HAP-1 (cell line): ENCODE measurements at regions of chr9 and their contacts with region 1.

Region 1: GRCh38 chr9:20356403-20357035 is 265.8 kb downstream of the MLLT3 start:
- DNase-seq: peak; percentile 78 to 82
- H3K4me3 ChIP-seq: no peak overlapping the region
- H3K4me1 ChIP-seq: peaks cover 6% of the 10 kb centered on the region
- H3K27me3 ChIP-seq: no peaks in the 10 kb centered on the region

Region 2: DNA sequence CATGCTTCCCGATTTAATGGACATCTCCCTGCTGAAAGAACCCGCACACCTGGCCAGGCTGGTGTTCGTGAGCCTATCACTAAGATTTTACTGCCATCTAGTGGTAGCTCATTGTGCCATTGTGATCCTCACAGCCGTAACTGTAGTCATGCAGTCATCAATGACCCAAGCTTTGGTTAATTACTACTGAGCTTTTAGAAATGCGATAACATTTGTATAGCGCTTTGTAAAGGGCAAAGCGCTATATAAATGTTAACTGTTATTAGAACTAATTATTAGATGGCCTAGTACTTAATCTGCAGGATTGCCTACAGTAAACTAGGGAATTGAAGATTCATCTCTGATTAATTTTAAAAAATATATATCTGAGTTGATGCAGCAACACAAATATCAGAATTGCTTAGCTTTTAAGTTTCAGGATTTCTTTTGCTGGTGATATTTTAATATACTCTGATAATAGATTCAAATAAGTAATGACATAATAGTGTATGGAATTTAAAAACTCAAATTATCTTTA is 584.7 kb after region 1 on chr9:
- in situ Hi-C with region 1: loop called (anchors 10 kb)
- DNase-seq: peak; percentile 72
- H3K4me3 ChIP-seq: no peak overlapping the region
- H3K4me1 ChIP-seq: peaks cover 9% of the 10 kb centered on the region
- H3K27me3 ChIP-seq: no peaks in the 10 kb centered on the region